ENCODE measurements at regions of chr3 and their contacts with region 1.

Region 1: DNA sequence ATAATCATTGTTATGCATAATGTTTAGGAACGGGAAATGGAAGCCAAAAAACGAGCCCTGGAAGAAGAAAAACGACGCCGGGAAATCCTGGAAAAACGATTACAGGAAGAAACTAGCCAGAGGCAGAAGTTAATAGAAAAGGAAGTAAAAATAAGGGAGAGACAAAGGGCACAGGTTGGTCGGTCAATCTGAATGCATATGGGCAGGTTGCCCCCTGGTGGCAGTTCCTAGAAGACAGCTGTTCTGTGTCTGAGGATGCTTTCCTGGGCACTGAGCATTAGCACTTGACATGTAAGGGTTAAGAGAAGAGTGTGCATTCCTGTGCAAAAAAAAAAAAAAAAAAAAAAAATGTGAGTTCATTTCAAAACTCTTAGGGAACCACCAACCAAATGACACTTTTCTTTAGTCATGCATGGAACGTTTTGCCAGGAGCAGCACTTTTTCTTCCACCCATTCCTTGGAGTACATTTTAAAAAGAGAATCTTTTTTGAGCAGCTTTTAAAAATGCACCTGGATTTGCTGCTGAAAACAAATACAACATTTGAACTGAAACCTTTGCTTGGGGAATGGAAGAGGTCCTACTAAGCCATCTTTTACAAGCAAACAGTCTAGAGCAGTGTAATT is 11.1 kb upstream of the ABHD10 start:
- DNase-seq: peak; percentile 81 to 91 (median 84)
- H3K4me3 ChIP-seq: peak overlapping the region in 1 of 7 experiments; percentile 19
- H3K27ac ChIP-seq: peak overlapping the region in 1 of 2 experiments; percentile 17
- H3K4me1 ChIP-seq: peaks cover 0 to 8% (median 4%) of the 10 kb centered on the region in 4 experiments
- H3K27me3 ChIP-seq: no peaks in the 10 kb centered on the region

Region 2: DNA sequence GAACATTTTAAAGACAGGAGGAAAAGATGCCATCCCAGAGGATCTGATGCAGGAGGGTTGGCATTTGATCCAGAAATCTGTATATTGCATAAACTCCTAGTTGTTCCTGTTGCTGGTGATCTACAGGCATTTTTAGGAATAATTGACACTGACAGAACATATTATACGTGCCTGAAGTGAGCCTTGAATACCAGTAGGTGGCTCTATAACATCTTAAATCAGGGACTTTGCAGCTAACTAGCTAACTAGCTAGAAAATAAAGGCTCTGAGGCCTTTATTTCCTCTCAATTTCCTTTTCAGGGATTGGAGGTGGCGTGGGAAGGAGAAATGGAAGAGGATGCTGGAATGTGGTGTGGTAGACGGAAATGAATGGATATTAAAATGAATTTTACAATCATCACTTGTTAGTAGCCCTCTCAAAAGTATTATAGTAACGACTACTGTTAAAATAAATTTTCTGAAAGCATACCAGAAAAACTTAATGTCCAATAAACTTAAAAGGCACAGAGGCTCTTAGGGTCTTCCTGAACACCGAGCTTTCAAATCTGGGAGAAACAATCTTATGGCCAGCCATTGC is 298.8 kb before region 1 on chr3:
- CTCF ChIA-PET with region 1: interaction called, 34 read pairs
- POLR2A ChIA-PET with region 1: no interaction called
- DNase-seq: peak; percentile 53 to 64 (median 62)
- H3K4me3 ChIP-seq: no peak overlapping the region
- H3K27ac ChIP-seq: no peak overlapping the region
- H3K4me1 ChIP-seq: peaks cover 12 to 44% (median 29%) of the 10 kb centered on the region in 4 experiments
- H3K27me3 ChIP-seq: no peaks in the 10 kb centered on the region

Region 3: DNA sequence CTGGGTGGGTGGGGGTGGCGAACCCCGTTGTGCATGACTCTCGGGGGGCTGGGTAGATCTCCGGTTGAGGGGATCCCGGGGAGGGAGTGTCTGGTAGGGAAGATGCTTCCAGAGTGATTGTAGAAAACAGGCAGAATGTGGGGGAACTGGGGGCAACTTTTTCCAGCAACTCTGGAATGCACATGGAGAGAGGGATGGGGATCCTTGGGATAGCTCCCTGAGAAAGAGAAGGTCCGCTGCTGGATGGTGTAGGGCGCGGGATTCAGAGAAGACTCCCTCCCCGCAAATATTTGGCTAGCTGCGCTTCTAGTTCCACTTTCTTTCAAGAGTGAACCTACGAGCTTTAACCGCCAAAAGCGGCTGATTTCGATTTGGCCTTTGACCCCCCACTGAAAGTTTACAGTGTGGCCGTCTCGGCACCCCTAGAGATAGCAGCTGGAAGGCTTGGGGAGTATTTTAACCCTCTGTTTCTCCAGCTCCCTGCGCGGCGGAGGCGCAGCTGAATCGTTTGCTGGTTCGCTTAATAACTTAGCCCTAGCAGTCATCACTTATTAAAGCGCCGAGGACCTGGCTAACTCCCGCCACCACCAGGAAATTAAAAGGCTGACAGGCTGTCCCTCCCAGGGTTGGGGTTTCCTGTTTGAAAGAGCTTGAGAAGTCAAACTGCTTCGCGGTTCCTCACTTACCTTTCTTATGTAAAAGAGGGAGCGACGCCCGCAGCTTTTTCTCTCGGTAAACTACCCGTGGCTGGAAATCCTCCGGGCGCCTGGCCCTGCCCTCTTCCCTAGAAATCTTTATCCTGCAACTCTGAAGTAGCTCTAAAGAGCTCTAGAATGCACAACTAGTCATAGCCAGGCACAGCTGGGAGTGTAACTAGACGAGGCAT is 107.5 kb before region 1 on chr3:
- CTCF ChIA-PET with region 1: interaction called, 14 read pairs
- POLR2A ChIA-PET with region 1: no interaction called
- DNase-seq: peak; percentile 83 to 90 (median 86)
- H3K4me3 ChIP-seq: peak overlapping the region; percentile 47 to 96 (median 81)
- H3K27ac ChIP-seq: peak overlapping the region in 1 of 2 experiments; percentile 32
- H3K4me1 ChIP-seq: peaks cover 4 to 24% (median 19%) of the 10 kb centered on the region in 4 experiments
- H3K27me3 ChIP-seq: peaks cover 0 to 10% (median 3%) of the 10 kb centered on the region in 5 experiments

Region 4: DNA sequence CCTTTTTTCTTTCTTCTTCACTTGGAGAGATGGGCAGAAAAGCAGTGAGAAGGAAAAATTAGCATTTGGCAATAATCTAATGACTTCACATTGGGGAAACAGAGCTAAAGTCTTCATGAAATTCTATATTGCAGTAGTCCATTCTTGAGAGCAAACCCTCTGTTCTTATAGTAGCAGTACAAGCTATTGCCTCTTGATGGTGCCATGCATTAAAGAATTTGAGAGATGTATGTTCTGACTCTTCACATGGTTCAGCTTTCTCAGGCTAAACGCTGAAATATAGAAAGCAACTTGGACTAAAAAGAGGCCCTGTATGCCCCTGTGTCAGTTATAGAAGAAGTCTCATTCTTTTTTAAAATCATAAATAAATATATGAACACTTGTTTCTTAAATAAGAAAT is 72.7 kb before region 1 on chr3:
- CTCF ChIA-PET with region 1: interaction called, 85 read pairs
- POLR2A ChIA-PET with region 1: no interaction called
- DNase-seq: peak; percentile 72 to 83 (median 81)
- H3K4me3 ChIP-seq: no peak overlapping the region
- H3K27ac ChIP-seq: no peak overlapping the region
- H3K4me1 ChIP-seq: no peaks in the 10 kb centered on the region
- H3K27me3 ChIP-seq: no peaks in the 10 kb centered on the region

Region 5: DNA sequence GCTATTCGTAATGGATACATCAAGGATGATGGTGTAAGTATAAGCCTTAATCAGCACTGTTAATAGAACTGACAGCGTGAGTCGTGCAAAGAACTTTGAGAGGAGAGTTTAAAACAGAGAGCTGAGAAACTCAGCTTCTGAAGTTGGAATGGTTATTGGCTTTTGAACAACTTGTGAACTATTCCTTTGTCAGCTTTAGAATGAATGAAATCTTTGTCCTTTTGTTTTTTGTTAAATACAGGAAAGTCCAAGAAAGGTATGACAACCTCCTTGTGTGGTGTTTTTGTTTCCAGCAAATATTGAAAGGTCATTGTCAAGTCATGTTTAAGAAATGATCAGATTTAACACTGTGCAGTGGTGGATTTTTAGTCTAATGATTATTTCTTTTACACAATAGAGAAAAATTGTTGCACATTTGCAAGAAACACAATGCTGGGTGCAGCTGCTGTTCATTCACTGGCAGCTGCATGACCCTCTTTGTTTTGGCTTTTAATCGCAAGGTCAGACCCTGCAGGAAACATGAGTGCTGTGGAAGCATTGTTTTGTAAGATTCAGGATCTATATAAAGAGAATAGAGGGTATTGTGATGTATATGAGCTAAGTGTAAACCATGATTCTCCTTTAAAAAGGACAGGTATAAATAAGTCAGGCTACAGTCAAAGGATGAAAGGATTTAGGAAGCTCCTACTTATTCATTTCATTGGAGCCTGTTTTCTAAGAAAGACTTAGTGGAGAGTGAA is 10.6 kb before region 1 on chr3:
- CTCF ChIA-PET with region 1: interaction called, 12 read pairs
- POLR2A ChIA-PET with region 1: no interaction called
- DNase-seq: no peak
- H3K4me3 ChIP-seq: no peak overlapping the region
- H3K27ac ChIP-seq: no peak overlapping the region
- H3K4me1 ChIP-seq: peaks cover 0 to 1% (median 0%) of the 10 kb centered on the region in 4 experiments
- H3K27me3 ChIP-seq: no peaks in the 10 kb centered on the region

Region 6: DNA sequence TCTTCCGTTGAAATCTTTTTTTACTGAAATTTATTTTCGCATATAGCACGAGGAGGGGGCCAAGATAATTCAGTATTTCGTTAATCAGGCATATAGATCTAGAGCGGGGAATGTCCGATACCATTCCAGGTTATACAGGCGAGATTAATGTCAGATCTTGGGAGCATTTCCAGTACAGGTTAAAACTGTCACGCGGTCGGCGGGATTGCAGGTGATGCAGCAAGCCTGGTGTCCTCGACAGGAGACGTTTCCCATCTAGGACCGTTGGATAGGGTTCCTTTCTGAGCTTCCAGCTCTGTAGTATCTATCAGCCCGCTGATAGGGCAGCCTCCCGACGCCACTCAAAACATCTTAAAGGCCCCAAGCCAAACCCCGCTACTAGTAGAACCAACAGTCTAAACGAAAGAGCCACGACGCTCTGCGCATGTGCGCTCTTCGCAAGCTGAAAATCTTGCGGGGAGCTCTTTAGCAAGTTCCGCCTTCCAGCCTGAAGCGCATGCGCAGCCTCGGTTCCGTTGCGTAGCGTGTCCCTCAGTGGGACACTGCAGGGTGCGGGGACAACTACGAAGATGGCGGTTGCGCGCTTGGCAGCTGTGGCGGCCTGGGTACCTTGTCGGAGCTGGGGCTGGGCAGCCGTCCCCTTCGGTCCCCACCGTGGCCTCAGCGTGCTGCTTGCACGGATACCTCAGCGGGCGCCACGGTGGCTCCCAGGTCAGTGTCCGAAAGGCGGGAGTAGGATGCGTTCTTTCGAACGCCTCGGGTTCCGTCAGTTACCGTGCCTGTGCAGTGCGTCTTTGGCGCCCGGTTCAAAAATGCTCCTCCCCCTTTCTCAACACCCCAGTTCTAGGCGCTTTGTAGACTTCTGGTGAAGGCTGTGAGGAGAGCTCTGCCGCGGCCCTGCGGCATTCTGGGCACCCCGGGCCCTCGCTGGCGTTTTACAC is 11.0 kb after region 1 on chr3 and contains the start of gene ABHD10:
- CTCF ChIA-PET with region 1: interaction called, 17 read pairs
- POLR2A ChIA-PET with region 1: no interaction called
- DNase-seq: peak; percentile 98 to 100 (median 98)
- H3K4me3 ChIP-seq: peak within 1 kb of the TSS; percentile 48 to 98 (median 93)
- H3K27ac ChIP-seq: peak within 1 kb of the TSS; percentile 52 to 85
- H3K4me1 ChIP-seq: peaks cover 5 to 35% (median 13%) of the 10 kb centered on the region in 4 experiments
- H3K27me3 ChIP-seq: no peaks in the 10 kb centered on the region

Region 7: DNA sequence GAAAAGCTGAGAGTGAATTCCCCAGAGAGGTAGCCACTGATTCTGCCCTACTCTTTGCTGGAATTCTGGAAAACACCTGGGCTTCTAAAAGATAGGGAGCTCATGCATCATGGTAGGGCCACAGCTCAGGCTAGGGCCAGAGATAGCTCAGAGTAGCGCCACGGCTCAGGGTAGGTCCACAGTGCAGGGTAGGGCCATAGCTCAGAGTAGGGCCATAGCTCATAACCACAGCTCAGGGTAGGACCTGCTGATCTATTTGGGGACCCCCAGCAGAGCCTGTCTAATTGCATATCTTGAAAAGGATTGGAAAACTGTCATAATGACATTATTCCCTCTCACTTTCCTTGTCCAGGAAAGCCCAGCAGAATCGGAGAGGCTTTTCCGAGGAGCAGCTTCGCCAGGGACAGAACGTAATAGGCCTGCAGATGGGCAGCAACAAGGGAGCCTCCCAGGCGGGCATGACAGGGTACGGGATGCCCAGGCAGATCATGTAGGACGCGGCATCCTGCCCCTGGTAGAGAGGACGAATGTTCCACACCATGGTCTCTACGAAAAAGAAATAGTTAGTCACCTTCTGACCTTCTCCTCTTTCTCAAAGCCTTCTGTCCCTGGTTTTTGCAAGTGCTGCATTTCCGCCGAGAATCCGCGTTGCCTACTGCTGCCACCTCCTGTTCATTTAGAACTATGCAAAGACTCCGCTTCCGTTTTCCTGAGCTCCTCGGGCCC is 45.5 kb after region 1 on chr3:
- CTCF ChIA-PET with region 1: interaction called, 18 read pairs
- POLR2A ChIA-PET with region 1: no interaction called
- DNase-seq: peak; percentile 65 to 79 (median 74)
- H3K4me3 ChIP-seq: peak overlapping the region in 2 of 7 experiments; percentile 8 to 26
- H3K27ac ChIP-seq: no peak overlapping the region
- H3K4me1 ChIP-seq: peaks cover 0 to 10% (median 2%) of the 10 kb centered on the region in 4 experiments
- H3K27me3 ChIP-seq: no peaks in the 10 kb centered on the region

Region 8: DNA sequence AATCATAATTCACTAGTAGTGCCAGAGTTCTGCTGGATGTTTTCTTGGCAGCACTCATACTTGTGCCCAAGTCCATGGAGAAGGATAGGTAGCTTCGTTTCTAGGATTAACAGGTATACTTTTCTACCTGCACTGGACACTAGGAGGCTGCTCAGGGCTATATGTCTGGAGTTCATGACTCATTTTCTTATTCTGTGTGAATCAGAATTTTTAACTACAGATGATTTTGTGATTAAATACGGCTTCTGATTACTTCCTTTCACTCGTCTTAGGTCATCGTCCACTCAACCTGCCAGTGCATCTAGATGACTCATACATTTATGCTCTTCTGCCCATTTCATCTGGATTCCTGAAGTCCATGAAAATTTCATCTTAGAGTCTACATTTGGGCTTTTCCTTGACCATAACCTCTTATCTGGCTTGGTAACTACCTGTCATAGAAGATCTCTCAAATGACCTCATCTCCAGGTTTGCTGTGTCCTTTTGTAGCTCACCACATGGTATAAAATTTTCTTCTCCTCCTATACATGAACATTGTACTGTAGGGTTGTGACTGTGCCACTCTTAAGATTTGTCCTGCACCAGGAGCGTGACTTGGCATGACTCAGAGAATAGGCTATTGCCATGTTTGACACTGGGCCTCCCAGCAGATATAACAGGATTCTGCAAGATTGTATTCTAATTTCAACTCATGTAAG is 232.0 kb after region 1 on chr3:
- CTCF ChIA-PET with region 1: no interaction called
- POLR2A ChIA-PET with region 1: no interaction called
- DNase-seq: no peak
- H3K4me3 ChIP-seq: no peak overlapping the region
- H3K27ac ChIP-seq: no peak overlapping the region
- H3K4me1 ChIP-seq: peaks cover 0 to 5% (median 0%) of the 10 kb centered on the region in 4 experiments
- H3K27me3 ChIP-seq: no peaks in the 10 kb centered on the region